MCF 10A (cell line): ENCODE measurements at regions of chr4 and their contacts with region 1.

Region 1: GRCh38 chr4:52038103-52038912 is at the start of gene SGCB:
- DNase-seq: peak; percentile 35
- H3K4me3 Mint-ChIP-seq: peak within 1 kb of the TSS; percentile 83
- H3K27ac Mint-ChIP-seq: peak within 1 kb of the TSS; percentile 20
- H3K4me1 Mint-ChIP-seq: peaks cover 25% of the 10 kb centered on the region
- H3K27me3 Mint-ChIP-seq: peaks cover 22% of the 10 kb centered on the region
- CTCF ChIP-seq: no peak
- total RNA-seq, gene SGCB: 27.0 and 28.2 TPM in 2 replicates

Region 2: GRCh38 chr4:52051619-52052474 is 13.5 kb after region 1 on chr4:
- CTCF ChIA-PET with region 1: interaction called, 4 read pairs
- POLR2A ChIA-PET with region 1: interaction called, 38 read pairs
- intact Hi-C with region 1: no loop called
- DNase-seq: peak; percentile 95
- H3K4me3 Mint-ChIP-seq: peak overlapping the region; percentile 88
- H3K27ac Mint-ChIP-seq: peak overlapping the region; percentile 95
- H3K4me1 Mint-ChIP-seq: peaks cover 27% of the 10 kb centered on the region
- H3K27me3 Mint-ChIP-seq: no peaks in the 10 kb centered on the region
- CTCF ChIP-seq: no peak

Region 3: DNA sequence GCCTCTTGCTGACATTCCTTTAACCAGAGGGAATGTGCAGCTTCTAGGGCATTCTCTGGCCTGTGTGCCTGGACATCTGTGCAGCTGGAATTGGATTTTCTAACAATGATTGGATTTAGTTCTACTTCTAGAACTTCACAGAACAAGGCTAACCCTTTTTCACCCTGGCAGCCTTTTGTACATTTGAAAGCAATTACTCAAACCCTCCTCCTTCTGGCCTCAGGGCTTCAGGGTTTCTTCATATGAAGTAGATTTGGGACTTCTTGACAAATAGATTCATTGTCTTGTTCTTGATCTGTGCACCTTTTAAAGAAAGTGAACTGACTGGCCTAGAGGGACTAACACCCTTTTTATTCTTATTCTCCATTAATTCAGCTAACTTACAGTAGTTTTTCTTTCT is 42.9 kb after region 1 on chr4:
- CTCF ChIA-PET with region 1: no interaction called
- POLR2A ChIA-PET with region 1: no interaction called
- intact Hi-C with region 1: loop called (anchors 1 kb)
- DNase-seq: no peak
- H3K4me3 Mint-ChIP-seq: no peak overlapping the region
- H3K27ac Mint-ChIP-seq: no peak overlapping the region
- H3K4me1 Mint-ChIP-seq: no peaks in the 10 kb centered on the region
- H3K27me3 Mint-ChIP-seq: no peaks in the 10 kb centered on the region
- CTCF ChIP-seq: no peak